Mammary epithelial cell (primary cell): ENCODE measurements at regions of chr17 and their contacts with region 1.

Region 1: GRCh38 chr17:15303851-15304250 is 37.5 kb downstream of the TEKT3 start:
- DNase-seq: no peak
- H3K4me3 ChIP-seq: no peak overlapping the region
- H3K27ac ChIP-seq: no peak overlapping the region
- H3K4me1 ChIP-seq: no peaks in the 10 kb centered on the region
- H3K27me3 ChIP-seq: peaks cover 3% of the 10 kb centered on the region
- CTCF ChIP-seq: no peak

Region 2: GRCh38 chr17:15233022-15233805 is 70.6 kb before region 1 on chr17:
- CTCF ChIA-PET with region 1: no interaction called
- dilution Hi-C with region 1: loop called (anchors 5 kb)
- in situ Hi-C with region 1: no loop called
- intact Hi-C with region 1: no loop called
- DNase-seq: peak; percentile 62
- H3K4me3 ChIP-seq: no peak overlapping the region
- H3K27ac ChIP-seq: no peak overlapping the region
- H3K4me1 ChIP-seq: peaks cover 4% of the 10 kb centered on the region
- H3K27me3 ChIP-seq: no peaks in the 10 kb centered on the region
- CTCF ChIP-seq: peak; percentile 35 to 63